Motor neuron (in vitro differentiated cells): ENCODE measurements at regions of chr6 and their contacts with region 1.

Region 1: DNA sequence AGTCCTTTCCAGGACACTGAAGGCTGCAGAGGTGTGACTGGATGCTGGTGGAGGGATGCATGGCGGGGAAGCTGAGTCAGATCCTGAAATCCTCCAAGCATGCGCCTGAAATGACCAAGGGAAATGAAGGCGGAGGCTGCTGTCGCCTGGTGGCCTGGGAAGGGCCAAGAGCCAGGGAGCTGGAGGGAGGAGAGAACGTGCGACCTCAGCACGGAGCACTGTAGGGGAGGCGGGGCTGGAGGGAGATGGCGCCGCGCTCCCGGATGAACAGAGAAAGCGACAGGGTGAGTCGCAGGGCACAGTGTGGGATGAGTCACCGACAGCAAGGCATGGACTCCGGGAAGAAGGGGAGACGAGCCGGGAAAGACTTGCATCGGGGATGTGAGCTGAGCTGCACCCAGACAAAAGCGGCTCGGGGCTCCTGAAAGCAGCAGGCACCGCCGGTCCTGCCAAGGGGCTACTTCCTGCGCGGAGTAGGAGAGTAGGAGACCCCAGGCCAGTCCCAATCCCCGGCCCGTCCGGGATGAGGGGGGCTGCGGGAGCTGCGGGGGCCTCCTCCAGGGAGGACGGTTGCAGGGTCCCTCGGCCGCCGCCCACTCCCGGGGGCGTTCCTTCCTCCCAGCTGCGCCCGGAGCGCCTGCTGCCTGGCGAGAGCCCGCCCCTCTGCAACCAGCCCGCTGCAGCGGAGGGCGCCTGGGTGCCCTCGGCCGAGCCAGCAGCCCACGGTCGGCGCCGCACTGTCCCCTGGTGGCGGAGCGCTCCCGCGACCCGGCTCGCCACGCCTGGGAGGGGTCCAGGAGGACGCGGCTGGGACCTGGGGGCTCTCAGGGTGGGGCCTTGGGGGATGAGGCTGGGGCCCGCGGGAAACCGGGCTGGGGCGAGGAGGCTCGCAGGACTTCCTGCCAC is 11.0 kb upstream of the NQO2 start:
- ATAC-seq: peak; percentile 63 to 85 (median 82)
- H3K4me3 ChIP-seq: peak overlapping the region; percentile 49 to 84 (median 57)
- H3K27ac ChIP-seq: peak overlapping the region; percentile 99
- H3K4me1 ChIP-seq: peaks cover 22 to 28% of the 10 kb centered on the region in 2 donors

Region 2: GRCh38 chr6:2353412-2354137 is 635.1 kb before region 1 on chr6:
- in situ Hi-C with region 1: no loop called
- ATAC-seq: peak in 6 of 8 experiments; percentile 41 to 76 (median 60)
- H3K4me3 ChIP-seq: no peak overlapping the region
- H3K27ac ChIP-seq: no peak overlapping the region
- H3K4me1 ChIP-seq: peaks cover 0 to 3% of the 10 kb centered on the region in 2 donors

Region 3: GRCh38 chr6:3052481-3053230 is 64.0 kb after region 1 on chr6:
- in situ Hi-C with region 1: loop called in 3 of 9 experiments (anchors 10 kb)
- ATAC-seq: no peak
- H3K4me3 ChIP-seq: no peak overlapping the region
- H3K27ac ChIP-seq: no peak overlapping the region
- H3K4me1 ChIP-seq: peaks cover 0 to 15% of the 10 kb centered on the region in 2 donors

Region 4: DNA sequence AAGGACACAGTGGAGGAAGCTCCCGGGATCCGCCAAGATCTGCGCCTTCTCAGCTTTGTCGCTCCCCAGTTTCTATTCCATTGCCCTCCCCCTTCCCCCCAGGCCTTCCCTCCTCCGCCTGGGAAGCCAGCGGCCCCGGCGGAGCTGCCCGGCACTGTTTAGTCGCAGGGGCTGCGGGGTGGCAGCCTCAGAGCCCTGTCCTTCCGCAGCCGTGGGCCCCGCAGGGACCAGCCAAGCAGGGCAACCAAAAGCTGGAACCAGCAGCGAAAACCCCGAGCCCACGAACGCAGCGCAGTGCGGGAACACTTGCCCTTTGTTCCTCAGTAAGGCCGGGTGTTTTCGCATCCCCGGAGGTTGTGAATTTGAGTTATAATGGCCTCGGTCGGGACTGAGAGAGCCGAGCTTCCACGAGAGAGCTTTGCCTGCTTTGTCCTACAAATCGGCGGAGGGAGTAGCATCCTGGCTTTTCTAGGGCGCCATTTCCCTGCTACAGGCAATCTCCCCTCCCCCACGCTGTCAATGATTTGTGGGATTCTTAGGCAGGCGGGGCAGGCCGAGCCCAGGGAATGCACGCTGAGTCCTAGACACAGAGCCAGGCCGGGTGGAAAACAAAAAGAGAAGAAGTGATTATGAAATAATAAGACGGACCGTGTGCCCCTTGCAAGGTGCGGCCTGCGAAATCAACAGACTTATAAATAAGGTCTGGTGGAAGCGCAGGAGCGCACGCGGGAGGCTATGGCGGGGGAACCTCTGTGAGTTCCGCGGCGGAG is 242.8 kb after region 1 on chr6:
- in situ Hi-C with region 1: loop called in 1 of 9 experiments (anchors 25 kb)
- ATAC-seq: peak; percentile 11 to 60 (median 20)
- H3K4me3 ChIP-seq: peak overlapping the region; percentile 85 to 93 (median 91)
- H3K27ac ChIP-seq: peak overlapping the region; percentile 98 to 100
- H3K4me1 ChIP-seq: peaks cover 17 to 19% of the 10 kb centered on the region in 2 donors